Activated CD4-positive, alpha-beta memory T cell treated with anti-CD3 and anti-CD28 coated beads for 36 hours (primary cell): ENCODE measurements at regions of chr5 and their contacts with region 1.

Region 1: DNA sequence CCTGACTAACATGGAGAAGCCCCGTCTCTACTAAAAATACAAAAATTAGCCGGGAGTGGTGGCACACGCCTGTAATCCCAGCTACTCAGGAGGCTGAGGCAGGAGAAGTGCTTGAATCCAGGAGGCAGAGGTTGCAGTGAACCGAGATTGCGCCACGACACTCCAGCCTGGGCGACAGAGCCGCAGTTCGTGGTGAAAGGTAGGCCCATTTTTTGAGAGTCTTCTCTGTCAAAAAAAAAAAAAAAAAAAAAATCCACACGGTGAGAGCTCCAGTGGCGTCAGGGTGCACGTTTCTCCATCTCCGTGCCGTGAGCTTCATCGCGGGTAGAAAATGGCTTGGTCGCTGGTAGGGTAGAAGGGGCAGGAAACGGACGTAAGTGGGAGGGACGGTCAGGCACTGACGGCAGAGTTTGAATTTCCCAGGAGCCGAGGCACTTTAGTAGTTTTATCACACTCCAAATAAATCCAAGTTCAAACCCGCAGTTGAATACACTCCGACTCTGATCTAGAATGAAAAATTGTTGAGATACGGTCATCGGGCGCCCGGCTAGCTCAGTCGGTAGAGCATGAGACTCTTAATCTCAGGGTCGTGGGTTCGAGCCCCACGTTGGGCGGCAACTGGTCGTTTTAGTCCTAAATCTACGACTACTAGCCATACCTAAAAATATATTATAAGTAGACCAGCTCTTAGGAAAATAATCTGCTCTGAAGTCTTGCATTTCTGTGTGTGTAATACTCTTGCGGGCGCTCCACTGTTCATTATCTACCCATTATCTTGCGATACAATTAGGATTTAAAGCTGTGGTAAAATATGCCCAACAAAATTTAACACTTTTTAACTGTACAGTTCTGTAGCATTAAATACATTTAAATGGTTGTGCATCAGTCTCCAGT is 2.5 kb upstream of the TRIM7 start:
- DNase-seq: peak; percentile 90
- H3K4me3 Mint-ChIP-seq: peak overlapping the region; percentile 86
- H3K27ac Mint-ChIP-seq: peak overlapping the region; percentile 93
- H3K4me1 Mint-ChIP-seq: peaks cover 27% of the 10 kb centered on the region
- H3K27me3 Mint-ChIP-seq: peaks cover 17% of the 10 kb centered on the region

Region 2: DNA sequence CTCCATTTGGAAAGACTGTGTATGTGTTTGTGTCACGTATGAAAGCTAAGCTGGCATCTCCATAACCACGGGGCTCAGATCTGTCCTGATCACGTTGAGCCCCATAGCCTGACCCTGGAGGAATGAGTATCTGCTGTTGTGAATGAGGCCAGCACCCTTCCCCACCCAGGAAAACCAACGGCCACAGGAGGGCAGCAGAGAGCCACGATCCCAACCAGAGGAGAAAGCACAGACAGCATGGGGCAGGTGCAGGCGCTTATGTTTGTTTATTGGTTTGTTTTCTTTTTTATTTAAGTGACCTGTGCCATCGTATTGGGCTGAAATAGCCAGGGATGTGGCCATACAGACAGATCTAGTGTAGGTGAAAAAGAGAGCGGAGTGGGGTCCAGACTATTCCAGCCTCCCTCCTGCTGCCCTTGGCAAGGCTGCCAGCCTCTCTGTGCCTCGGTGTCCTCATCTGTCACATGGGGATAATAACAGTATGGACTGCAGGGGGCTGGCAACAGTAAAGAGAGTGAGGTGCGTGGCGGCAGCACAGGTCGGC is 48.1 kb before region 1 on chr5:
- CTCF ChIA-PET with region 1: interaction called, 3 read pairs
- POLR2A ChIA-PET with region 1: no interaction called
- intact Hi-C with region 1: loop called (anchors 2 kb)
- DNase-seq: peak; percentile 96
- H3K4me3 Mint-ChIP-seq: peak overlapping the region; percentile 36
- H3K27ac Mint-ChIP-seq: peak overlapping the region; percentile 72
- H3K4me1 Mint-ChIP-seq: peaks cover 33% of the 10 kb centered on the region
- H3K27me3 Mint-ChIP-seq: peaks cover 17% of the 10 kb centered on the region

Region 3: GRCh38 chr5:181260387-181261319 is 53.2 kb after region 1 on chr5 and contains the start of gene TRIM52:
- CTCF ChIA-PET with region 1: interaction called, 7 read pairs
- POLR2A ChIA-PET with region 1: interaction called, 11 read pairs
- intact Hi-C with region 1: loop called (anchors 1 kb)
- DNase-seq: peak; percentile 93
- H3K4me3 Mint-ChIP-seq: peak within 1 kb of the TSS; percentile 96
- H3K27ac Mint-ChIP-seq: peak within 1 kb of the TSS; percentile 97
- H3K4me1 Mint-ChIP-seq: peaks cover 39% of the 10 kb centered on the region
- H3K27me3 Mint-ChIP-seq: no peaks in the 10 kb centered on the region
- total RNA-seq, gene TRIM52: 10.9 to 11.7 TPM